GM10248 (cell line): ENCODE measurements at regions of chr4 and their contacts with region 1.

Region 1: GRCh38 chr4:153541456-153542096 is 75.4 kb downstream of the TMEM131L start:
- DNase-seq: no peak
- CTCF ChIP-seq: no peak

Region 2: DNA sequence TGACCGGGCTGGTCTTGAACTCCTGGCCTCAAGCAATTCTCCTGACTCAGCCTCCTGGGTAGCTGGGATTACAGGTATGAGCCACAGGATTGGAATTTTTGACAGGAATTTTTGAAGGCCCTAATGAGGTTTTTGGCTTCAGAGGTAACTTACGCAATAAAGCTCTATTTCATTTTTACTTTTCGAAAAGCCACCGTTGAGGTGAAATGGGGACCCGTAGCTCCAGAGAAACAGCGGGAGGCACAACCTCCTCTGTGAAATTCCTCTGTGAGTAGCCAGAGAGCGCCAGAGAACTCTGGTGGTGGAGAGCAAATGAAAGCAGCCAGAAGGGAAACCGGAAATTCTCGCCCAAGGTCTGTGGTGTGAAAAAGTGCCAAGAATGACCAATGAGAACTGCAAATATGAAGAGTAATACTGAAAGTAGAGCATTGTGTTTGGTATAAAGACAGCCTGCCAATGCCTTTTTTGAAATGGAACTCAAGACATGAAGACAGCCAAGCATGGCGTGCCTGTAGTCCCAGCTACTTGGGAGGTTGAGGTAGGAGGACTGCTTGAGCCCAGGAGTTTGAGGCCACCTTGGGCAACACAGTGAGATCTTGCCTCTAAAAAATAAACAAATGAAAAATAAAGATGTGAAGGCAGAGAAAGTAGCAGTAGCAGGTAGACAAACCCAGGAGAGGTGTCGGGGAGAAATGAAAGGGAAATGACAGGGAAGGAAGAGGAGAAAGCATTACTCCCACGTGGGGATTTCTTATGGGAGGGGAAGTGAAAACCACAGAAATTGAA is 108.4 kb before region 1 on chr4:
- CTCF ChIA-PET with region 1: interaction called, 10 read pairs
- POLR2A ChIA-PET with region 1: no interaction called
- DNase-seq: peak; percentile 83
- CTCF ChIP-seq: peak; percentile 82

Region 3: GRCh38 chr4:153514001-153514526 is 27.5 kb before region 1 on chr4:
- CTCF ChIA-PET with region 1: interaction called, 12 read pairs
- POLR2A ChIA-PET with region 1: no interaction called
- DNase-seq: no peak
- CTCF ChIP-seq: no peak

Region 4: GRCh38 chr4:153528705-153529485 is 12.7 kb before region 1 on chr4:
- CTCF ChIA-PET with region 1: interaction called, 33 read pairs
- POLR2A ChIA-PET with region 1: no interaction called
- DNase-seq: no peak
- CTCF ChIP-seq: no peak

Region 5: GRCh38 chr4:153553155-153553818 is 11.7 kb after region 1 on chr4:
- CTCF ChIA-PET with region 1: interaction called, 21 read pairs
- POLR2A ChIA-PET with region 1: no interaction called
- DNase-seq: no peak
- CTCF ChIP-seq: no peak

Region 6: DNA sequence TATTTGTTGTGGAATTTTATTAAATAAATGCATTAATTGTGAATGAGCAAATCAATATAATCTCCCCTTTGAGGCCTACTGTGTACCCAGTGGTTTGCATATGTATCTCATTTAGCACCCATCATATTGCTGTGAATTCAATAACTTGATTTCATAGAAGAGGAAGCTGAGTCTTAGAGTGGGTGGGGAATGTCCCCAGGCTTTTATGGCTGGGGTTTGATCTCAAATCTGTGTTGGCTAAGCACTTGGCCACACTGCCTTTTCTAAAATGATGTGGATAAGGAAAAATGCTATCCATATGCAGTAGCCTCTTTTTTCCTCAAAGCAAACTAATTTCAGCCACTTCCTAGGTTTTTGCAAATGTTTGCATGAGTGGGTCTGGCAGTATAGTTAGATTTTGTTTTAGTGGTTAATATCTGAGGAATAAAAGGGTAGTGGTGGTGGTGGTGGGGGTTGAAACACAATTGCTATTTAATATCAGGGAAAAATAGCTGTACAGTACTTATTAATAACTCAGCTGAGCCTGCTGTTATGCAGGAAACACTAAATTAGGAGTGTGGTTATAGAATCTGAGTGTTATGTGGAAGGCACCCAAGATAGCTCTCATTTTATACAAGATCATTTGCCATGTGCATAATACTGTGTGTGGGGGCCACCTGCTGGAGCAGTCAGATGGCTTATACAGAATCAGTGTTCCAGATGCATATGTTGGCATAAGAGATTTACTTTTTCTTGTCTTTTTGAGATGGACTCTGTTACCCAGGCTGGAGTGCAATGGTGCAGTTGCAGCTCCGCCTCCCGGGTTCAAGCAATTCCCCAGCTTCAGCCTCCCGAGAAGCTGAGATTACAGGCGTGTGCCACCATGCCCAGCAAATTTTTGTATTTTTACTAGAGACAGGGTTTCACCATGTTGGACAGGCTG is 32.6 kb after region 1 on chr4:
- CTCF ChIA-PET with region 1: interaction called, 10 read pairs
- POLR2A ChIA-PET with region 1: no interaction called
- DNase-seq: peak; percentile 43
- CTCF ChIP-seq: peak; percentile 56

Region 7: GRCh38 chr4:153628796-153629315 is 87.3 kb after region 1 on chr4:
- CTCF ChIA-PET with region 1: no interaction called
- POLR2A ChIA-PET with region 1: no interaction called
- DNase-seq: no peak
- CTCF ChIP-seq: no peak